SK-N-SH (cell line): ENCODE measurements at regions of chr1 and their contacts with region 1.

Region 1: DNA sequence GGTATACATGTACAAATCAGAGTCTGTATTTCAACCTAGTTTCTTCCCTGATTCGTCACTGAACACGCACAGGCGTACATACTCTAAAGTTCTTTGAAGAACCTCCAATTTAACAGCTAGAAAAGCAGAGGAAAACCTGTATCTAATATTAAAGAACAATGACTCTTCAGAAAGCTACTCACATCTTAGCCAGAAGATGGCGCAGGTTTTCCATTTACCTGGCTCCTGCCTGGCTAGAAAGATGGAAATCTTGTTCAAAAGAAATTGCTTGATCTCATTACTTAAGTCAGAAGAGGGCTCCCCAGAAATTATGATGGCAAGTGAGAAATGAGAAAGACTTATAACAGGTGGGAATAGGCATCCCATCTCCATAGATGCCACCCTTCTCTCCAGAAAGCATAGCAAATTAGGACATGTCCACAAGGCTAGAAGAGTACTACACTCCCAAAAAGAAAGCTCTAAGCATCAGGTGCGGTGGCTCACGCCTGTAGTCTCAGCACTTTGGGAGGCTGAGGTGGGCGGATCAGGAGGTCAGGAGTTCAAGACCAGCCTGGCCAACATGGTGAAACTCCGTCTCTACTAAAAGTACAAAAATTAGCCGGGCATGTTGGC is 19.0 kb upstream of the L1TD1 start:
- DNase-seq: peak; percentile 51
- H3K4me3 ChIP-seq: peak overlapping the region in 1 of 2 experiments; percentile 7; a peak in 1 of 4 replicates
- H3K27ac ChIP-seq: no peak overlapping the region
- H3K4me1 ChIP-seq: no peaks in the 10 kb centered on the region; a peak in 1 of 4 replicates
- H3K27me3 ChIP-seq: no peaks in the 10 kb centered on the region
- CTCF ChIP-seq: peak; percentile 88
- EP300 ChIP-seq: no peak
- RAD21 ChIP-seq: peak; percentile 95

Region 2: DNA sequence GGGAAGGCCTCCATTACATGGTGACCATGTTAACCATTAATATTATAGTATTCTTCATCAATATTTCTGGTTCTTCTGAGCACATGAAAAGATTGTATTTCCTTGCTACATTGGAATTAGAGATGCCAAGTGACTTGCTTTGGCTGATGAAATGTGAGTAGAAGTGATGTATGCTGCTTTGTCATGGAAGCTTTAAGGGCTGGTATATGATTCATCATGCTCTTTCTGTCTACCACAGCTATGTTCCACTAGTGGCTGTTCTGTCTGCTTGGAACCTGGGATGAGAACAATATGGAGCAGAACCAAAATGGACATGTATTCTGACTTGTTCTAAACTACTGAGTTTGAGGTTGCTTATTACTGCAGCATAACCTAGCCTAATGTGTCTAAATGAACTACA is 614.0 kb before region 1 on chr1:
- CTCF ChIA-PET with region 1: no interaction called
- POLR2A ChIA-PET with region 1: no interaction called
- DNase-seq: no peak
- H3K4me3 ChIP-seq: no peak overlapping the region
- H3K27ac ChIP-seq: no peak overlapping the region
- H3K4me1 ChIP-seq: no peaks in the 10 kb centered on the region
- H3K27me3 ChIP-seq: no peaks in the 10 kb centered on the region
- CTCF ChIP-seq: no peak
- EP300 ChIP-seq: no peak
- RAD21 ChIP-seq: no peak

Region 3: DNA sequence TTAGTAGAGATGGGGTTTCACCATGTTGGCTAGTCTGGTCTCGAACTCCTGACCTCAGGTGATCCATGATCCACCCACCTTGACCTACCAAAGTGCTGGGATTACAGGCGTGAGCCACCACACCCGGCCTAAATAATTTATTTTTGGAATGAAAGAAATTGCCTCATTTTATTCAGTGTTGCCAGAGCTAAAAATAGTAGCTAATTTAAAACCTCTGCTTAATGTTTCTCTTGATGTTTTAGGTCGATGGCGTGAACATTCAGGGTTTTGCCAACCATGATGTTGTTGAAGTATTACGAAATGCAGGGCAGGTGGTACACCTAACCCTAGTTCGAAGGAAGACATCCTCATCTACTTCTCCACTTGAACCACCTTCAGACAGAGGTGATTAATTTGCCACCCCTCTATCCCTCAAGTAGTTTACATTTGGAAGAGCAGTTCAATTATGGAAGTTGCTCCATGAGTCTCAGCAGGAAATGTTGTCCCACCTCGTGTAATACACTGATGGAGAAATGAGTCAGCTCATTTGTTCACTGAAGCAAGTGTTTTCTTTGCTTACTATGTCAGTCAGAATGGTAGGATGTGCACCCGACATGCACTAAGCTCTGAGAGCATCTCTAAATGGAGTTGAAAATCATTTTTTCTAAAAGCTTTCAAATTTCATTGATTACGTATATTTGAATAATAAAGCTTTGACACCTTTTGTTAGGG is 378.5 kb before region 1 on chr1:
- CTCF ChIA-PET with region 1: no interaction called
- POLR2A ChIA-PET with region 1: no interaction called
- DNase-seq: no peak
- H3K4me3 ChIP-seq: no peak overlapping the region
- H3K27ac ChIP-seq: no peak overlapping the region
- H3K4me1 ChIP-seq: no peaks in the 10 kb centered on the region
- H3K27me3 ChIP-seq: no peaks in the 10 kb centered on the region
- CTCF ChIP-seq: no peak
- EP300 ChIP-seq: no peak
- RAD21 ChIP-seq: no peak

Region 4: GRCh38 chr1:62144238-62144831 is 31.3 kb before region 1 on chr1:
- CTCF ChIA-PET with region 1: interaction called, 22 read pairs
- POLR2A ChIA-PET with region 1: no interaction called
- DNase-seq: peak; percentile 41
- H3K4me3 ChIP-seq: no peak overlapping the region
- H3K27ac ChIP-seq: no peak overlapping the region
- H3K4me1 ChIP-seq: no peaks in the 10 kb centered on the region; a peak in 1 of 4 replicates
- H3K27me3 ChIP-seq: no peaks in the 10 kb centered on the region
- CTCF ChIP-seq: peak; percentile 80
- EP300 ChIP-seq: no peak
- RAD21 ChIP-seq: peak; percentile 69

Region 5: GRCh38 chr1:62159940-62160348 is 15.7 kb before region 1 on chr1:
- CTCF ChIA-PET with region 1: interaction called, 12 read pairs
- POLR2A ChIA-PET with region 1: no interaction called
- DNase-seq: no peak
- H3K4me3 ChIP-seq: no peak overlapping the region
- H3K27ac ChIP-seq: no peak overlapping the region
- H3K4me1 ChIP-seq: no peaks in the 10 kb centered on the region
- H3K27me3 ChIP-seq: no peaks in the 10 kb centered on the region
- CTCF ChIP-seq: no peak
- EP300 ChIP-seq: no peak
- RAD21 ChIP-seq: no peak

Region 6: GRCh38 chr1:62229932-62230331 is 54.3 kb after region 1 on chr1:
- CTCF ChIA-PET with region 1: interaction called, 10 read pairs
- POLR2A ChIA-PET with region 1: no interaction called
- DNase-seq: peak; percentile 57
- H3K4me3 ChIP-seq: no peak overlapping the region
- H3K27ac ChIP-seq: no peak overlapping the region; a peak in 1 of 4 replicates
- H3K4me1 ChIP-seq: peaks cover 0 to 16% of the 10 kb centered on the region in 2 experiments; a peak in 1 of 4 replicates
- H3K27me3 ChIP-seq: no peaks in the 10 kb centered on the region
- CTCF ChIP-seq: no peak
- EP300 ChIP-seq: peak in 1 of 2 experiments; percentile 85; a peak in 2 of 4 replicates
- RAD21 ChIP-seq: peak; percentile 50

Region 7: DNA sequence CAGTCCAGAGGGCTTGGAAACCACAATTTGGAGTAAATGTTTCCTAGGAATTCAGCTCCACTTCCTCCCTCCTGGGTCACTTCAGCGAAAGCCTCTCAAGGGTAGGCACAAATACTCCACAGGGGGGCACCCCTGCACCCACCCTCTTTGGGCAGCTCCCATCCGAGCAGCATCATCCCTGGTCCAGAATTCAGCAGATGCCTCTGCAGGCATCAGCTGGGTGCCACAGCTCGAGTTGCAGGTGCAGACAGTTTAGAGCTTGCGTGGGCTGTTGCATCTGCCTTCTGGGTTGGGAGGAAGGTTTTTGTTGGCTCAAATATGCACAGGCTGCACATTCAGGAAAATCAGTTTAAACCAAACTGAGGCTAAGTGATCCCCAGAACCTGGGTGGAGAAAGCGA is 118.6 kb after region 1 on chr1:
- CTCF ChIA-PET with region 1: interaction called, 14 read pairs
- POLR2A ChIA-PET with region 1: no interaction called
- DNase-seq: peak; percentile 45
- H3K4me3 ChIP-seq: no peak overlapping the region
- H3K27ac ChIP-seq: no peak overlapping the region
- H3K4me1 ChIP-seq: no peaks in the 10 kb centered on the region
- H3K27me3 ChIP-seq: no peaks in the 10 kb centered on the region
- CTCF ChIP-seq: peak; percentile 24; the same call in 1 of the 2 replicates
- EP300 ChIP-seq: no peak
- RAD21 ChIP-seq: peak; percentile 54

Region 8: GRCh38 chr1:62417361-62417999 is 241.8 kb after region 1 on chr1:
- CTCF ChIA-PET with region 1: interaction called, 22 read pairs
- POLR2A ChIA-PET with region 1: no interaction called
- DNase-seq: no peak
- H3K4me3 ChIP-seq: no peak overlapping the region
- H3K27ac ChIP-seq: no peak overlapping the region
- H3K4me1 ChIP-seq: no peaks in the 10 kb centered on the region
- H3K27me3 ChIP-seq: no peaks in the 10 kb centered on the region; the same call in 1 of the 2 replicates
- CTCF ChIP-seq: no peak
- EP300 ChIP-seq: no peak
- RAD21 ChIP-seq: no peak

Region 9: GRCh38 chr1:62746085-62746808 is 570.6 kb after region 1 on chr1:
- CTCF ChIA-PET with region 1: interaction called, 16 read pairs
- POLR2A ChIA-PET with region 1: no interaction called
- DNase-seq: peak; percentile 56
- H3K4me3 ChIP-seq: no peak overlapping the region; a peak in 1 of 4 replicates
- H3K27ac ChIP-seq: no peak overlapping the region
- H3K4me1 ChIP-seq: no peaks in the 10 kb centered on the region
- H3K27me3 ChIP-seq: no peaks in the 10 kb centered on the region
- CTCF ChIP-seq: peak; percentile 81
- EP300 ChIP-seq: no peak
- RAD21 ChIP-seq: peak; percentile 92